ENCODE measurements at regions of chr2 and their contacts with region 1.

Region 1: DNA sequence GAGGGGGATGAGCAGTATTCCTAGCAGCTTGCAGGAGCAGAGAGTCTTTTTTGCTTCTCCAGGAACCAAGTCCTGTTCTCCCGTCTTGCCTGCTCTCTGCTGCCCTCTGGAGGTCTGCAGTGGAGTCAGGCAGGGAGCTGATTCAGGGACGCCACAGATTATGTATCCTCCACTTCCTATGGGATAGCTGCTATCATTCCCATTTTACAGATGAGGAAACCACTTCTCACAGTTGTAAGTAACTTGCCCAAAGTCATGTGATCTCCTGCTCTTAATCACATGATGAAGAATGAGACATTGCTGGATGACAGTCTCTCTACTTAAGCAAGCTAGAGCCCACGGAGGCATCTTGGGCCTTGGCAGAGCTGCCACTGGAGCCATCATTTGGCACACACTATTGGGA is 8.3 kb downstream of the SLC4A5 start:
- DNase-seq: peak; percentile 49
- H3K4me3 ChIP-seq: no peak overlapping the region
- H3K27ac ChIP-seq: no peak overlapping the region
- H3K4me1 ChIP-seq: no peaks in the 10 kb centered on the region
- H3K27me3 ChIP-seq: no peaks in the 10 kb centered on the region
- CTCF ChIP-seq: peak; percentile 96 to 98

Region 2: DNA sequence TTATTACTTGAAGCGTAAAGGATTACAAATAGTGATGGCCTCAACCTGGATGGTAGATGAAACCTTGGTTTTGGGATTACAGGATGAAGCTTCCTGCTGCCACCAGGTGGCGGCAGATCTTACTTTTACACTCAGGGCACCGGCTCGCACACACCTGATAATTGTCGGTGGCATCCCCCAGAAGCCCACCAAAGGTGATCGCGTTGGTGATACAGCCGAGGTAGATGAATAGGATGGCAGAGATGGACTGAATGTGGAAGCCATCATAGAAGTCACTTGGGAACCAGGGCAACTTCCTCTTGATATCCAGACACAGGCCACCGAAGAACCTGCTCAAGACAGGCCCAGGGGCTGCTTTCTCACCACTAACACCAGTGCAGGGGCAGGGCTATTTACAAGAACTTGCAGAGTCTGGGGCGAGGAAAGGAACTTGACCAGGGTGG is 84.7 kb before region 1 on chr2:
- CTCF ChIA-PET with region 1: interaction called, 4 read pairs
- dilution Hi-C with region 1: no loop called
- in situ Hi-C with region 1: no loop called
- intact Hi-C with region 1: loop called (anchors 1 kb)
- DNase-seq: peak; percentile 9
- H3K4me3 ChIP-seq: no peak overlapping the region
- H3K27ac ChIP-seq: no peak overlapping the region
- H3K4me1 ChIP-seq: no peaks in the 10 kb centered on the region
- H3K27me3 ChIP-seq: no peaks in the 10 kb centered on the region
- CTCF ChIP-seq: peak; percentile 71 to 80

Region 3: DNA sequence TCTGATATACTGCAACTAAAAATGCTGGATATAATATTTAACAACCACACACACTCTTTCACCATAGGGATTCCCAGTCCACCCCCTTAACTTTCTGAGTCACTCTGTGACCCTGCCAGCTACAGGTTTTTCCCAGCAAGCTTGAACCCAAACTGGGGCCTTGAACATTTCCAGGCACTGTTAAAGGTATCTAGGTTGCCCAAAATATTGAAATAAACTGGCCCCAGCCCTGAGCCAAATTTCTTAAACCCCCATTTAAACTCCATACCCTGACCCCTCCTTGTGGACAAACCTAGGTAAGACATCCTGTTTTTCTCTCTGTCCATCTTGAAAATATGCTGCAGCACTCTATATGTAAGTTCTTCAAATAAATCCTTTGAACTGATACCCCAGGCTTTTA is 64.9 kb after region 1 on chr2:
- CTCF ChIA-PET with region 1: no interaction called
- dilution Hi-C with region 1: no loop called
- in situ Hi-C with region 1: no loop called
- intact Hi-C with region 1: loop called (anchors 1 kb)
- DNase-seq: peak; percentile 27
- H3K4me3 ChIP-seq: no peak overlapping the region
- H3K27ac ChIP-seq: no peak overlapping the region
- H3K4me1 ChIP-seq: no peaks in the 10 kb centered on the region
- H3K27me3 ChIP-seq: no peaks in the 10 kb centered on the region
- CTCF ChIP-seq: peak; percentile 47 to 67

Region 4: GRCh38 chr2:74529357-74530238 is 194.7 kb after region 1 on chr2 and contains the starts of genes AUP1 and HTRA2:
- CTCF ChIA-PET with region 1: no interaction called
- dilution Hi-C with region 1: no loop called
- in situ Hi-C with region 1: no loop called
- intact Hi-C with region 1: loop called (anchors 2 kb)
- DNase-seq: peak; percentile 100
- H3K4me3 ChIP-seq: peak within 1 kb of the TSS; percentile 58 to 81 (median 66)
- H3K27ac ChIP-seq: peak within 1 kb of the TSS; percentile 79
- H3K4me1 ChIP-seq: peaks cover 38% of the 10 kb centered on the region
- H3K27me3 ChIP-seq: no peaks in the 10 kb centered on the region
- CTCF ChIP-seq: no peak
- total RNA-seq, gene AUP1: 67.5 to 111 TPM
- total RNA-seq, gene HTRA2: 29.2 to 30.8 TPM

Region 5: DNA sequence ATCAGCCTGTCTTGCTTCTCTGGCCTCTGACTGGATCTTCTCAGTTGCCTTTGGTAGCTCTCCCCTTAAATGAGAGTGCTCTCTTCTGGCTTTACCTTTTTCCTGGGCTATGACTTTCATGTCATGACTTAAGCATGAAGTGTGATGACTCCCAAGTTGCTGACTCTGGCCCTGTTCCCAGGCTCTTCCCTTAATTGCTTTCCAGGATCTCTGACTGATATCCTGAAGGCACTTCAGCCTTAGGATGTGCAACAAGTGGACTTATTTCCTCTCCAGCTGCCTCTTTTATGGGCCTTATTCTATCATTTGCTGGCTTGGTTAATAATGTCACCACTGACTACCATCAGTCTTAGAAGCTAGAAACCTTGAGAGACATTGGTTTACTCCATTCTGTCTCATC is 336.5 kb after region 1 on chr2:
- CTCF ChIA-PET with region 1: interaction called, 12 read pairs
- dilution Hi-C with region 1: no loop called
- in situ Hi-C with region 1: no loop called
- intact Hi-C with region 1: no loop called
- DNase-seq: peak; percentile 63
- H3K4me3 ChIP-seq: no peak overlapping the region
- H3K27ac ChIP-seq: no peak overlapping the region
- H3K4me1 ChIP-seq: peaks cover 4% of the 10 kb centered on the region
- H3K27me3 ChIP-seq: no peaks in the 10 kb centered on the region
- CTCF ChIP-seq: no peak

Measured in mammary epithelial cell (primary cell).